ENCODE measurements at regions of chr17 and their contacts with region 1.

Region 1: GRCh38 chr17:77957857-77958715 is at the start of gene TNRC6C:
- DNase-seq: peak; percentile 100
- ATAC-seq: peak; percentile 97 to 99 (median 98)
- H3K4me3 ChIP-seq: peak within 1 kb of the TSS; percentile 67 to 95 (median 79)
- H3K27ac ChIP-seq: peak within 1 kb of the TSS; percentile 71 to 96 (median 85)
- H3K4me1 ChIP-seq: peaks cover 6 to 50% (median 31%) of the 10 kb centered on the region in 12 donors
- H3K27me3 ChIP-seq: peaks cover 0 to 16% (median 0%) of the 10 kb centered on the region in 9 donors
- CTCF ChIP-seq: peak in 4 of 12 donors; percentile 24 to 36 (median 34)
- POLR2A ChIP-seq: peak; percentile 100
- total RNA-seq, gene TNRC6C: 11.1 to 24.7 (median 21.4) TPM

Region 2: DNA sequence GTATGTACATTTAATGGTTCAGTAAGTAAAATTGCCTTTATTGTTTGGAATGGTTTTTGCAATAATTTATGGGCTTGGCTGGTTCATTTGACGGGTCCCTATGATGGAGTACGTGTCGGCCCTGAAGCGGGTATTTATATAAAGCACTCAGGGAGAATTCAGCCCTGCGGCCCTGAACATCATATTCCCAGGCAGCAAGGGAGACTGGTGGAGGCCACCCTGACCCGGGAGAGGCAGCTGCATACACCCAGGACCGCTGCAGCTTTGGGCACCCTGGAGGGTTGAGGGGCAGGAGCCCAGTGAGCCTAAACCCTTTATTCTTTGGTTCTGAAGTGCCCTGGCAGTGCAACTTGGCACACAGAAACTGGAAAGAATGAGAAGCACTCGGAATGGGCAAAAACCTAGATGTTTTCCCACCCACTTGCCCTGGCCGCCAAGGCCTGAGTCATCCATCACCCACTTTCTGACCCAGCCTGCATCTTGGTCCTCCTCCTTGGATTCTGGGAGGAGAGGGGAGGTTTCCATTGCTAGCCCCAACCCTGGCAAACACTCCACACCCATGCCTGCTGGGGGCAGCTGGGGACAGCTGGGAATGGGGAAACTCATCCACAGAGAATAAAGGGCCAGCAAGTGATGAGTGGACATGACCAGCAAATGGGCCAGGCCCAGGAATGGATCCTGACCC is 161.8 kb before region 1 on chr17:
- intact Hi-C with region 1: loop called in 1 of 10 experiments (anchors 10 kb)
- DNase-seq: peak in 1 of 5 donors; percentile 18
- ATAC-seq: no peak
- H3K4me3 ChIP-seq: no peak overlapping the region
- H3K27ac ChIP-seq: peak overlapping the region in 1 of 12 donors; percentile 47
- H3K4me1 ChIP-seq: no peaks in the 10 kb centered on the region
- H3K27me3 ChIP-seq: no peaks in the 10 kb centered on the region
- CTCF ChIP-seq: no peak
- POLR2A ChIP-seq: no peak

Region 3: GRCh38 chr17:77834170-77835115 is 123.6 kb before region 1 on chr17:
- intact Hi-C with region 1: loop called in 2 of 10 experiments (anchors 2 to 5 kb)
- DNase-seq: peak; percentile 52 to 84 (median 82)
- ATAC-seq: peak in 3 of 4 donors; percentile 42 to 77 (median 68)
- H3K4me3 ChIP-seq: peak overlapping the region in 1 of 12 donors; percentile 24
- H3K27ac ChIP-seq: peak overlapping the region in 9 of 12 donors; percentile 8 to 70 (median 44)
- H3K4me1 ChIP-seq: peaks cover 13 to 69% (median 48%) of the 10 kb centered on the region in 12 donors
- H3K27me3 ChIP-seq: no peaks in the 10 kb centered on the region
- CTCF ChIP-seq: no peak
- POLR2A ChIP-seq: no peak

Region 4: DNA sequence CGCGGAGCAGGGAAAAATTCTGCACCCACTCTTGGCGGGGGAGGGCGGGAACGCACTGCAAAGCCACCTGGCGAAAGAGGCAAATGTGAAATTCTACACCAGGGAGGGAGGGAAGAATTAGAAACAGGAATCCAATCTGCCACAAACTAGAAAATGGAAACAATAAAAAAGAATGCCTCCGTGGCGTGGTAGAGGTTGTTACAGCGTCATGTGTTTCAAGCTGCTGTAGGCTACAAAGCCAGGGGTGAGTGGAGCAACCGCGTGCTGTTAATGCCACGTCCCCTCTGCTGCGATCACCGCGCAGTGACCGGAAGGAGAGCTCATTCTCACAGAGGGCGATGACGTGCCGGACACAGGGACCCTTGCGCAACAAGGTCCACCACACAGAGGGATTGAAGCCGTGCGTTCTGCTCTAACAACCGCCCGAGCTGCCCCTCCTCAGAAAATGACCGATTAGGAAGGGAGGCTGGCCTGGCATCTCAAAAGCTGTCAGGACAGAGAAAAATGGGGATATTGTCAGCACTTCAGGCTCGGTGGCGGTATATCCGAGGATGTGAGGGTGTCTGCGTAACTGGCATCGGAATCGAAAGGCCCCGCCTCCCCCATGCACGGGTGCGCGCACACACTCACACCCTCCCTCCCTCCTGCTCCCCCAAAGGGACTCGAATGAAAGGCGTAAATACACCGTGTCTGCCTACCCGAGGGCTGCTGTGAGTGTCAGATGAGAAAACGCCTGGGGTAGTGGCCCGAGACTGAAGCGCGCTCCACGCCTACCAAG is 70.4 kb before region 1 on chr17:
- intact Hi-C with region 1: loop called in 3 of 10 experiments (anchors 2 to 5 kb)
- DNase-seq: peak; percentile 80 to 91 (median 91)
- ATAC-seq: peak; percentile 71 to 92 (median 90)
- H3K4me3 ChIP-seq: peak overlapping the region; percentile 3 to 65 (median 56)
- H3K27ac ChIP-seq: peak overlapping the region; percentile 18 to 79 (median 65)
- H3K4me1 ChIP-seq: peaks cover 0 to 36% (median 20%) of the 10 kb centered on the region in 12 donors
- H3K27me3 ChIP-seq: no peaks in the 10 kb centered on the region
- CTCF ChIP-seq: no peak
- POLR2A ChIP-seq: peak in 1 of 2 donors; percentile 40

Region 5: DNA sequence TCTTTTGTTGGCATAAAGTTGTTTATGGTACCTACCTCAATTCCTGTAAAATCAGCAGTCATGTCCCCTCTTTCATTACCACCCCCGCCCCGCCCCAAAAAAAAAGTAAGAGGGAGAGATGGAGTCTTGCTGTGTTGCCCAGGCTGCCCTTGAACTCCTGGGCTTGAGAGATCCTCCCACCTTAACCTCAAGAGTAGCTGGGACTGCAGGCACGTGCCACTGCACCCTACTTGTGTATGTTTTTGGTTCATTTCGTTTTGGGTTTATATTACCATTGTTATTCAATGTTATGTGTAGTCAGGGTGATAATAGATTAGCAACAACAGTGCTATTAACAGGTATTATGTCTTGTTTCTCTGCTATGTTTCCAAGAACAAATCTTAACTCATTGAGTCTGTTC is 16.3 kb after region 1 on chr17:
- intact Hi-C with region 1: no loop called
- DNase-seq: no peak
- ATAC-seq: no peak
- H3K4me3 ChIP-seq: no peak overlapping the region
- H3K27ac ChIP-seq: no peak overlapping the region
- H3K4me1 ChIP-seq: peaks cover 0 to 31% (median 12%) of the 10 kb centered on the region in 12 donors
- H3K27me3 ChIP-seq: no peaks in the 10 kb centered on the region
- CTCF ChIP-seq: no peak
- POLR2A ChIP-seq: no peak

Region 6: DNA sequence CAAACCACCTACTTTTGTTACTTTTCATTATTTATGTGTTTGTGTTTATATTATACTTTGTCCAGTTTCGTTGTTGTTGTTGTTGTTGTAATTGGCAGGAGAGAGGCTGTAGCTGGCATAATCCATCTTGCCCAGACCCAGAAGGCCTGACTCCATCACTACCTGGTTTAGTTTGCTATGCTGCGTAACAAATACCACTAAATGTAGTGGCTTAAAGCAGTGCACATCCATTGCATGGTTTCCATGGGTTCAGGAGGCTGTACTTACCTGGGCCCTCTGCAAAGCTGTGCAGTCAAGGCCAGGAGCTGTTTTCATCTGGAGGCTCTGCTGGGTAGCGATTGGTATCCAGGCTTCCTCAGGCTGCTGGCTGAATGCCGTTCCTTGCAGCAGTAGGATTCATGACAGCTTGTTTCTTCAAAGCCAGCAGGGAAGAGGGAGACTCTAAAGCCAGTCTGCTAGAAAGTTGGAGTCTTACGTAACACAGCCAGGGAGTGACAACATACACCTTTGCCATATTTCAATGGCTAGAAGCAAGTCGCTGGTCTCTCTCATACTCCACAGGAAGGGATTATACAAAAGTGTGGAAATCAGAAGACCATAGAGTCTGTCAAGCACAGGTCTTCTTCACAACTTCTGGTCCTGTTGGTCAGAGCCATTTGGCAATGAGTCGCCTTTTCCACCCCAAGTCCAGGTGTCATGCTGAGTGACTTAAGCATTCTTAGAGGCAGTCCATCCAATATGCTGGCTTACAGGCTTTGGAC is 41.5 kb after region 1 on chr17:
- intact Hi-C with region 1: loop called in 6 of 10 experiments (anchors 5 kb)
- DNase-seq: no peak
- ATAC-seq: no peak
- H3K4me3 ChIP-seq: no peak overlapping the region
- H3K27ac ChIP-seq: peak overlapping the region in 1 of 12 donors; percentile 28
- H3K4me1 ChIP-seq: peaks cover 0 to 66% (median 42%) of the 10 kb centered on the region in 12 donors
- H3K27me3 ChIP-seq: no peaks in the 10 kb centered on the region
- CTCF ChIP-seq: no peak
- POLR2A ChIP-seq: no peak

Measured in heart left ventricle (tissue), 16 donors.